ENCODE measurements at regions of chr6 and their contacts with region 1.

Region 1: GRCh38 chr6:28355743-28356665 is 6.3 kb downstream of the ZKSCAN3 start:
- DNase-seq: peak; percentile 81
- H3K4me3 ChIP-seq: peak overlapping the region; percentile 41 to 75 (median 56)
- H3K27ac ChIP-seq: peak overlapping the region; percentile 86 to 94 (median 90)
- H3K4me1 ChIP-seq: peaks cover 16 to 25% (median 23%) of the 10 kb centered on the region in 4 donors
- H3K27me3 ChIP-seq: no peaks in the 10 kb centered on the region
- CTCF ChIP-seq: peak; percentile 84 to 96 (median 91)
- EP300 ChIP-seq: no peak
- POLR2A ChIP-seq: peak; percentile 46

Region 2: DNA sequence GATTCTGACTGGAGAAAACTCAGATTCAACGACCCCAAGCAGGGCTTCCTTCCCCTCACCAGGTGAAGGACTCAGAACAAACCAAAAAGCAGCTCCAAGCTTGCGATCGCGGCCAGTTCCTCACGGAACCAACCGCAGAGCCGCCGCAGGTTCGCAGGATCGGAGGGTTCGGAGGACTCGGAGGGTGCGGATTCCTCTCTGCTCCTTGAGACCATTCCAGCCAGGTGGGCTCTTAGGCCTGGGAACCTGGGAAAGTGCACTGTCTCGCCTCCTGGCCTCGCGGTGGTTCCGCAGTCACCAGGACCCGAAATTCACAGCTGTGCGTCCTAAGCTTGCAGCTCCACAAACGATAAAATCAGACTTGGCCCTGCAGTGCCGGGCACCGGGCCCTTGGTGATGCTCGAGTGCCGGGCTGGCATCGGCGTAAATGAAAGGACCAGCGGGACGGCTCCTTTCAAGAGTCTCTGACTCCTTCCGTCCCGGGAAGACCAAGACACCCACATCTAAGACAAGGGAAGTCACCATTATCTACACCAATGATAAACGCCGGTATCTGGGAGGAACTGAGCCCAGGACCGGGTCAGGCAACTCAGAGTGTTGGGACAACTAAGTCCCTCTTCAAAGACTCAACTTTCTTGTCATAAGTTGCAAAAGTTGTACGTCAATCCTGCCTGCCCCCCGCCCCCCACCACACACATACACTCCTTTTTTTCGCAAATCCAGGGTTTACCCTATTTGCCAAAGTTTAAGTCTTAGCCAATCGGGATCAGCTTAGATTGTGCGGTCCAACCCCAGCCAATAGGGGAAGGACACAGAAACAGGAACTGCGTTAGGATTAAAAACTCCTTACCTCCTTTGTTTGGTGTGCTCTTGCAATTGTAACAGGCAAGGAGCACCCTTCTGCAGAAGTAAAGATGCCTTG is 1178.3 kb before region 1 on chr6:
- in situ Hi-C with region 1: loop called in 1 of 4 experiments (anchors 25 kb)
- intact Hi-C with region 1: no loop called
- DNase-seq: peak; percentile 88
- H3K4me3 ChIP-seq: peak overlapping the region; percentile 80 to 96 (median 88)
- H3K27ac ChIP-seq: peak overlapping the region; percentile 91 to 96 (median 92)
- H3K4me1 ChIP-seq: peaks cover 0 to 17% (median 3%) of the 10 kb centered on the region in 4 donors
- H3K27me3 ChIP-seq: no peaks in the 10 kb centered on the region
- CTCF ChIP-seq: peak; percentile 39 to 72 (median 52)
- EP300 ChIP-seq: no peak
- POLR2A ChIP-seq: peak; percentile 59

Region 3: GRCh38 chr6:27902335-27903314 is 453.4 kb before region 1 on chr6:
- in situ Hi-C with region 1: loop called in 1 of 4 experiments (anchors 25 kb)
- intact Hi-C with region 1: no loop called
- DNase-seq: peak; percentile 91
- H3K4me3 ChIP-seq: peak overlapping the region; percentile 24 to 63 (median 46)
- H3K27ac ChIP-seq: peak overlapping the region; percentile 80 to 92 (median 88)
- H3K4me1 ChIP-seq: peaks cover 0 to 10% (median 5%) of the 10 kb centered on the region in 4 donors
- H3K27me3 ChIP-seq: peaks cover 8% of the 10 kb centered on the region
- CTCF ChIP-seq: peak in 1 of 5 experiments; percentile 7
- EP300 ChIP-seq: no peak
- POLR2A ChIP-seq: no peak

Region 4: DNA sequence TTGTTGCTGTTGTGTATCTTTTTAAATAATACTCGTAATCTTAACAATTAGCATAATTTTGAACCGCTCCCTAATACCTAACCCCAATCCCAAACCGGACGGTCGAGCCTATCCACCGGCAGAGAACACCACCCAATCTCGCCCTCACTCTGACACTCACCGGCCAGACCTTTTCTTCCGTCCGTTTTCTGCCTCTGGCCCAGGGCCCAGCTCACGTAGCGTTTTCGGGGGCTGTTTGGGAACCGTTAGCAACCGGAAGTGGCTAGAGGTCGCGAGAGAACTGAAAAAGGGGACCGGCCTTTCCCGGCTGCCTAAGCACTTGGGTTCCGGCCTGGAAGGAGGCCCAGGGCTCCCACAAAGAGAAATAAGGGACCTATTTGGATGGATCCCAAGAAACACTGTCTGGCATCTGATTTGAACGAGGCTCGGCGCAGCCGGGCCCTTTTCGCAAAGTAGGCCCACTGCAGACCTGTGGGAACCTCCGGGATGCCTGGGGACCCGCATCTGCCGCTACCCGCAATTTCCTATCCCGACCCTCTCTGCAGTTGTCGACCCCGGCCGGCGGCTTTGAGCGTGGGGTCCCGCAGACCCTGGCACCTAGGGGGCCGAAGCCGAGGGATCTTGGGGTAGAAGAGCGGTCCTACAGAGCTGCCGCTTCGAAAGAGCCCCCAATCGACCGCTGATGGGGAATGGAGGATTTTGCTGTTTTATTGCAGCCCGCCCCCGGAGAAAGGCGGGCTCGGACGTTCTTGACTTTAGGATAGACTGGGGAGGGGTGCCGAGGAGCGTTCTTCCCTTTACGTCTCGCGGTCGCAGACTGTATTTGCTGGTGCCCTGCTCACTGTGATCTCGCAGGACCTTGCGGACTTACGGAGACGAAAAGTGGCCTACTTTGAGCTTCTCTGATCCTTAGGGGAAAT is 219.2 kb before region 1 on chr6:
- in situ Hi-C with region 1: loop called (anchors 5 to 25 kb)
- intact Hi-C with region 1: loop called (anchors 10 kb)
- DNase-seq: peak; percentile 90
- H3K4me3 ChIP-seq: peak overlapping the region; percentile 52 to 73 (median 64)
- H3K27ac ChIP-seq: peak overlapping the region; percentile 87 to 95 (median 92)
- H3K4me1 ChIP-seq: peaks cover 5 to 45% (median 13%) of the 10 kb centered on the region in 4 donors
- H3K27me3 ChIP-seq: no peaks in the 10 kb centered on the region
- CTCF ChIP-seq: no peak
- EP300 ChIP-seq: no peak
- POLR2A ChIP-seq: peak; percentile 30

Region 5: GRCh38 chr6:28266962-28267694 is 88.9 kb before region 1 on chr6 and contains the start of gene ZSCAN26:
- in situ Hi-C with region 1: loop called in 1 of 4 experiments (anchors 25 kb)
- intact Hi-C with region 1: loop called (anchors 5 kb)
- DNase-seq: peak; percentile 85
- H3K4me3 ChIP-seq: peak within 1 kb of the TSS; percentile 70 to 88 (median 78)
- H3K27ac ChIP-seq: peak within 1 kb of the TSS; percentile 85 to 90 (median 86)
- H3K4me1 ChIP-seq: peaks cover 6 to 21% (median 8%) of the 10 kb centered on the region in 4 donors
- H3K27me3 ChIP-seq: peaks cover 3% of the 10 kb centered on the region
- CTCF ChIP-seq: no peak
- EP300 ChIP-seq: no peak
- POLR2A ChIP-seq: peak; percentile 62
- total RNA-seq, gene ZSCAN26: 13.9 to 19.4 (median 17.6) TPM